T-cell (primary cell): ENCODE measurements at regions of chr4 and their contacts with region 1.

Region 1: DNA sequence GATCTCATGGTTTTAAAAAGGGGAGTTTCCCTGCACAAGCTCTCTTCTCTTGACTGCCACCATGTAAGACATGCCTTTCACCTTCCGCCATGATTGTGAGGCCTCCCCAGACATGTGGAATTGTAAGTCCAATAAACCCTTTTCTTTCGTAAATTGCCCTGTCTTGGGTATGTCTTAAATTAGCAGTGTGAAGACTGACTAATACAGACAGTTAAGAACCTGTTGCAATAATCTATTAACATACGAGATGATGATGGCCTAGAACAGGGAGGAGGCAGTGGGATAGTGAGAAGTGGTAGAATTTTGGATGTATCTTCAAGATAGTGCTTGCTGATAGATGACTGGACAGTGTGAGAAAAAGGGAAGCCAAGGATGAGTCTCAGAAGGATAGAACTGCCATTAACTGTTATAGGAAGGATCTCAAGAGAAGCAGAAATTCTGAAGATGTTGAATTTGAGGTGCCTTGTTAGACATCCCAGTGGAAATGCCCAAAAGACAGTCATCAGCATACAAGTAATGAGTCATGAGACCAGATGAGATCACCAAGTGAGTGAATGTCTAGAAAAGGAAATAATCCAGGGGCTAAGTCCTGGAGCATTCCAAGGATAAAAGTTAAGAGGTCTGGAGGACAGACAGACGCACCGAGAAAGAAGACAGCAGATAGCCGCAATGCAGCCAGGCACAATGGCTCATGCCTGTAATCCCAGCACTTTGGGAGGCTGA is 38.8 kb upstream of the UGDH start:
- DNase-seq: no peak
- ATAC-seq: no peak
- H3K4me3 ChIP-seq: no peak overlapping the region
- H3K4me3 Mint-ChIP-seq: no peak overlapping the region
- H3K27ac ChIP-seq: no peak overlapping the region
- H3K27ac Mint-ChIP-seq: no peak overlapping the region
- H3K4me1 ChIP-seq: peaks cover 0 to 2% of the 10 kb centered on the region in 2 experiments
- H3K4me1 Mint-ChIP-seq: peaks cover 0 to 7% (median 0%) of the 10 kb centered on the region in 3 donors
- H3K27me3 ChIP-seq: no peaks in the 10 kb centered on the region
- H3K27me3 Mint-ChIP-seq: no peaks in the 10 kb centered on the region

Region 2: DNA sequence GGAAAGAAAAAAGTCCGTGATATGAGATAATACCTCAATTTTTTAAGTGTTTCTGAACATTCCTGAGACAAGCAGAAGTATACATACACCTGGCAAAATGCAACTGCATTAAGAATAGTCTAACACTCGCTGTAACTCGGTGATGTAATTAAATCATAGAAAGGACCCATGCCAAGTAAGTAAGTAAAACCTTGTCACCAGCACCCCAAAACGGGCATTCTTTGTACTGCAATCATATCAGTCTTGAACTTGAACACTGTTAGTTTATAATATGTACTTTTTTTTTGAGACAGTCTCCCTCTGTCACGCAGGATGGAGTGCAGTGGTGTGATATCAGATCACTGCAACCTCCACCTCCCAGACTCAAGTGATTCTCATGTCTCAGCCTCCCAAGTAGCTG is 25.3 kb after region 1 on chr4:
- CTCF ChIA-PET with region 1: no interaction called
- POLR2A ChIA-PET with region 1: interaction called in 1 of 2 experiments, 11 read pairs
- DNase-seq: no peak
- ATAC-seq: no peak
- H3K4me3 ChIP-seq: no peak overlapping the region
- H3K4me3 Mint-ChIP-seq: no peak overlapping the region
- H3K27ac ChIP-seq: no peak overlapping the region
- H3K27ac Mint-ChIP-seq: no peak overlapping the region
- H3K4me1 ChIP-seq: no peaks in the 10 kb centered on the region
- H3K4me1 Mint-ChIP-seq: no peaks in the 10 kb centered on the region
- H3K27me3 ChIP-seq: no peaks in the 10 kb centered on the region
- H3K27me3 Mint-ChIP-seq: no peaks in the 10 kb centered on the region